ENCODE measurements at regions of chr9 and their contacts with region 1.

Region 1: DNA sequence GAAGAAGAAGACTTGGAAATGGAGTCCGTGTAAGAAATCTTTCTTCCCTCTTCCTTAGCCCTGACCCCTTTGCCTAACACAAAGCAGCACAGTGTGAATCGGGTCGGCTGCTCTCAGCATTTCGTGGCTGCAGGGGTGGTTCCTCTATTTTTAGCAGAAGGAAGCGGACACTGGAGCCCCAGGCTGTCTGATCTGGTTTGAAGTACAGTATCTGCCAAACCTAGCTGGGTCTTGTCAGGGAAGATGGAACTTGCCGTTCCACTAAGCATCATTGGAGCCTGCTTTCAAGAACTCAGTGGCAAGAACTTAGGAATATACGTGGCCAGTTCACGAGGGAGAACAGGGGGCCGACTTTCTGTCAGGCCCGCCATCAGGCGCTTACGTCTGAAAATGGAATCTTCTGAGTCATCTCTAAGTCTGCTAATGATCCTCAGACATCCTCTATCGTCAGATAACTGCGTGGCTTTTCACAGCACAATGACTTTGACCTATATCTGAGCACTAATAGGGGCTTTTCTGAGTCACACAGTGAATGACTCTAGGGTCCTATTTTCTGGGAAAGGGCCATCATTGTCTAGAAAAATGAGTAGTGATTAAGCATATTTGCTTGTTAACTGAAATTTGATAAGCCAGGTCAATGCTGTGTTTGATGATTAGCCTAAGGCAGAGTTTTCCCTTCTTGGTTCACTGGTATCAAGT is 43.3 kb upstream of the NCS1 start:
- DNase-seq: peak; percentile 78
- H3K4me3 Mint-ChIP-seq: peak overlapping the region; percentile 71
- H3K27ac Mint-ChIP-seq: peak overlapping the region; percentile 98
- H3K4me1 Mint-ChIP-seq: peaks cover 49% of the 10 kb centered on the region
- H3K27me3 Mint-ChIP-seq: no peaks in the 10 kb centered on the region

Region 2: GRCh38 chr9:130064621-130065020 is 64.3 kb before region 1 on chr9:
- CTCF ChIA-PET with region 1: no interaction called
- POLR2A ChIA-PET with region 1: no interaction called
- intact Hi-C with region 1: no loop called
- DNase-seq: no peak
- H3K4me3 Mint-ChIP-seq: no peak overlapping the region
- H3K27ac Mint-ChIP-seq: no peak overlapping the region
- H3K4me1 Mint-ChIP-seq: peaks cover 19% of the 10 kb centered on the region
- H3K27me3 Mint-ChIP-seq: no peaks in the 10 kb centered on the region

Region 3: GRCh38 chr9:130167927-130168326 is 39.0 kb after region 1 on chr9:
- CTCF ChIA-PET with region 1: no interaction called
- POLR2A ChIA-PET with region 1: no interaction called
- intact Hi-C with region 1: loop called (anchors 5 kb)
- DNase-seq: no peak
- H3K4me3 Mint-ChIP-seq: no peak overlapping the region
- H3K27ac Mint-ChIP-seq: no peak overlapping the region
- H3K4me1 Mint-ChIP-seq: peaks cover 8% of the 10 kb centered on the region
- H3K27me3 Mint-ChIP-seq: peaks cover 3% of the 10 kb centered on the region

Region 4: GRCh38 chr9:130243015-130243734 is 114.3 kb after region 1 on chr9:
- CTCF ChIA-PET with region 1: interaction called, 8 read pairs
- POLR2A ChIA-PET with region 1: interaction called, 8 read pairs
- intact Hi-C with region 1: loop called (anchors 2 kb)
- DNase-seq: peak; percentile 88
- H3K4me3 Mint-ChIP-seq: peak overlapping the region; percentile 53
- H3K27ac Mint-ChIP-seq: peak overlapping the region; percentile 7
- H3K4me1 Mint-ChIP-seq: peaks cover 32% of the 10 kb centered on the region
- H3K27me3 Mint-ChIP-seq: no peaks in the 10 kb centered on the region